Common myeloid progenitor, CD34-positive (primary cell): ENCODE measurements at regions of chr14 and their contacts with region 1.

Region 1: GRCh38 chr14:102694530-102695166 is 82.6 kb upstream of the TRAF3 start:
- DNase-seq: peak; percentile 69 to 85 (median 79)
- H3K4me3 ChIP-seq: no peak overlapping the region
- H3K27ac ChIP-seq: no peak overlapping the region
- H3K4me1 ChIP-seq: peaks cover 6 to 17% (median 7%) of the 10 kb centered on the region in 4 experiments
- H3K27me3 ChIP-seq: no peaks in the 10 kb centered on the region

Region 2: GRCh38 chr14:102500158-102500662 is 194.4 kb before region 1 on chr14:
- CTCF ChIA-PET with region 1: no interaction called
- POLR2A ChIA-PET with region 1: no interaction called
- DNase-seq: peak; percentile 50 to 62 (median 52)
- H3K4me3 ChIP-seq: no peak overlapping the region
- H3K27ac ChIP-seq: no peak overlapping the region
- H3K4me1 ChIP-seq: peaks cover 0 to 11% (median 8%) of the 10 kb centered on the region in 4 experiments
- H3K27me3 ChIP-seq: no peaks in the 10 kb centered on the region

Region 3: DNA sequence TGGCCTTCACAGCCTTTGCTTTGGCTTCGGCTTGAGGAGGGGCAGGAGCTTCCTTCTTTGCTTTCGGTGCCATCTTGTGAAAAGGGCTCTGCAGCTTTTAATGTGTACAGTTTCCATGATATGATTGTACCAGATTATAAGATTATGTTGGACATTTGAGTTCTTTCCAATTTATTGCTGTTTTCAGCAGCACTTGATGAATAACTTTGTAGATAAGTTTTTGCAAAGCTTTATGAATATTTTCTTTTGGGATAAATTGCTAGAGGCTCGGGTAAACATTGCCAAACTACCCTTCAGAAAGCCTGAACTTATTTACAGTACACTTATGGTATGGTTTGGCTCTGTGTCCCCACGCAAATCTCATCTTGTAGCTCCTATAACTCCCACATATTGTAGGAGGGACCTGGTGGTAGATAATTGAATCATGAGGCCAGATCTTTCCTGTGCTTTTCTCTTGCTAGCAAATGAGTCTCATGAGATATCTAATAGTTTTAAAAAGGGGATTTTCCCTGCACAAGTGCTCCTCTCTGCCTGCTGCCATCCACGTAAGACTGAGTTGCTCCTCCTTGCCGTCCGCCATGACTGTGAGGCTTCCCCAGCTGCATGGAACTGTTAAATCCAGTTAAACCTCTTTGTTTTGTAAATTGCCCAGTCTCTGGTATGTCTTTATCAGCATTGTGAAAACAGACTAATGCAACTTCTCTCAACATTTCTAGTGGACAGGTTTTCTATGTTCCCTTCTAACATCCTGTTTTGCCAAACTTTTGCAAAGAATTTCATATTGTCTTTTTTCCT is 31.8 kb before region 1 on chr14:
- CTCF ChIA-PET with region 1: no interaction called
- POLR2A ChIA-PET with region 1: no interaction called
- DNase-seq: no peak
- H3K4me3 ChIP-seq: no peak overlapping the region
- H3K27ac ChIP-seq: no peak overlapping the region
- H3K4me1 ChIP-seq: peaks cover 0 to 23% (median 6%) of the 10 kb centered on the region in 4 experiments
- H3K27me3 ChIP-seq: no peaks in the 10 kb centered on the region

Region 4: DNA sequence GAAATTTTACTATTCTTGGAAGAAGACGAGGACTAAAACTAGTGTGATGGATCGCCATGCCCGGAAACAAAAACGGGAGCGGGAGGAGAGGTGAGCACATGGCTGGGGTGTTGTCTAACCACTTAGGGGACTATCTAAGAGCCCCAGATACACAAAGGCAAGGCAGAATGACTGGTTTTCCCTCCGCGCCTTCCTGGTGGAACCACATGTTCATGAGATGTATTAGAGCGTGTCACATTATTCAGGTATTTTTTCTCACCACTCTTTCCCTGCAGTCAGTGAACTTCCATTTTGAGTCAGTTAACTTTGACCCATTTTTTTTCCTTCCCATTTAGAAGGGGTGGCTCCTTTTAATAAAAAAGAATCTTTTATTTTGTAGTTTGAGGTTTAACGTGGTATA is 13.8 kb after region 1 on chr14:
- CTCF ChIA-PET with region 1: interaction called, 21 read pairs
- POLR2A ChIA-PET with region 1: no interaction called
- DNase-seq: no peak
- H3K4me3 ChIP-seq: no peak overlapping the region
- H3K27ac ChIP-seq: no peak overlapping the region
- H3K4me1 ChIP-seq: no peaks in the 10 kb centered on the region
- H3K27me3 ChIP-seq: no peaks in the 10 kb centered on the region

Region 5: DNA sequence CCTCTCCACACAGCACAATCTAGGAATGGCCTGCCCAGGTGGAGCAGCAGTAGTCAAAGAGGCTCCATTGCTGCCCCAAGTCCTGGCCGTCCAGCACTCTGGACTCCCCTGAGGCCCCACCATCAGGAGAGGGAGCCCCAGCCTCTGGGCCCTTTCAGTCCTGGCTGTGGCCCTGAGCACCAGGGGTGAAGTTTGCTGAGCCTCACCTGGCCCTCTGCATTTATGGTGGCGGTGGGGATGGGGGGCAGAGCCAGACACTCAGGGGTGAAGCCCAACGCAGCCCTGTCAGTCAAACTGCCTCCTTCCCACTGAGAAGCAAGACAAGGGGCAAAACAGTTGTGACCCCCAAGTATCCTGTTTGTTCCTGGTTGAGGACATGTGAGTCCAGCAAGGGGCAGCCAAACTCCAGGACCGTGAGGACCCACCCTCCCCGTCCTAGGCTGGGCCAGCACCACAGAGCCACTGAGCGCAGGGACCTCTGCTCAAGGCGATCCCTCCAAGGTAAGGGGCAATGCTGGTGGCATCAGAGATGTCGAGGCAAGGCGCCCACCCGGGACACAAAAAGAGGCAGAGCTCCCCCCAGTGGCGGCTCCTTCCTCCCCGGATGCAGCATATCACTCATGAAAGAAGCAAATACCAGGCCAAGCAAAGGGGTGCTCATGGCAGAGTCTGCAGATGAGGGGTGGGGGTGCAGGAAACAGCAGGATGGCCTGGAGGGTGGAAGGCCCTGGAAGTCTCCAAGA is 223.0 kb after region 1 on chr14:
- CTCF ChIA-PET with region 1: interaction called, 23 read pairs
- POLR2A ChIA-PET with region 1: no interaction called
- DNase-seq: peak; percentile 40 to 66 (median 63)
- H3K4me3 ChIP-seq: no peak overlapping the region
- H3K27ac ChIP-seq: no peak overlapping the region
- H3K4me1 ChIP-seq: peaks cover 0 to 13% (median 4%) of the 10 kb centered on the region in 4 experiments
- H3K27me3 ChIP-seq: peaks cover 5 to 27% (median 9%) of the 10 kb centered on the region in 5 experiments